ENCODE measurements at regions of chr11 and their contacts with region 1.

Region 1: GRCh38 chr11:1889224-1890120 is 2.2 kb downstream of the PRR33 start:
- DNase-seq: peak in 3 of 6 donors; percentile 38 to 79 (median 56)
- ATAC-seq: peak in 2 of 4 donors; percentile 49 to 56
- H3K4me3 ChIP-seq: no peak overlapping the region
- H3K27ac ChIP-seq: no peak overlapping the region
- H3K4me1 ChIP-seq: no peaks in the 10 kb centered on the region
- H3K27me3 ChIP-seq: no peaks in the 10 kb centered on the region
- CTCF ChIP-seq: no peak

Region 2: DNA sequence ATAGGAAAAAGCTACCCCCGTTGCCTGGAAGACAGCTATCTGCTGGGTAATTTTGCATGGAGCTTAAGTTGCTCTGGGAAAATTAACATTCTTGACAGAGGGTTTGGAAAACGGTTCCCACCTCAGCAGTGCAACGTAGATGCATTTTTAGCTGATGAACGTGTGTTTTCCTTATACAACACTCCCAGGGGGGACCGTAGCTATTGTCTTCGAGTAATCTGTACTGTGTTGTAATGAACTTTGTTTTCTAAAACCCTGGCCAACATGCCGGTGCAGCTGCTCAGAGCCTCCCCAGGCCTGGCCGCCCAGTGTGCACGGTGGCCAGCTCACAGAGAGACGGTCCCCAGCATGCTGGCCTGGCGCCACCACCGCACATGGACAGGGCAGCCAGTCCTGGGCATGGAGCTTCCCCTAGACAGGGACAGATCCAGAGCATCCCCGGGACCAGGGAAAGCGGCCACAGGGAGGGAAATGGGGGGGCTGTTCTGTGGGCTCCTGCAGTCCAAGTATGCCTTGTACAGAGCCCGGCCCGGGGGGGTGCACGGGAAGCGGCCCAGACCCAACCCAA is 32.2 kb after region 1 on chr11:
- intact Hi-C with region 1: loop called (anchors 1 kb)
- DNase-seq: peak in 3 of 6 donors; percentile 43 to 58 (median 58)
- ATAC-seq: peak in 2 of 4 donors; percentile 7 to 32
- H3K4me3 ChIP-seq: no peak overlapping the region
- H3K27ac ChIP-seq: no peak overlapping the region
- H3K4me1 ChIP-seq: no peaks in the 10 kb centered on the region
- H3K27me3 ChIP-seq: no peaks in the 10 kb centered on the region
- CTCF ChIP-seq: no peak

Region 3: DNA sequence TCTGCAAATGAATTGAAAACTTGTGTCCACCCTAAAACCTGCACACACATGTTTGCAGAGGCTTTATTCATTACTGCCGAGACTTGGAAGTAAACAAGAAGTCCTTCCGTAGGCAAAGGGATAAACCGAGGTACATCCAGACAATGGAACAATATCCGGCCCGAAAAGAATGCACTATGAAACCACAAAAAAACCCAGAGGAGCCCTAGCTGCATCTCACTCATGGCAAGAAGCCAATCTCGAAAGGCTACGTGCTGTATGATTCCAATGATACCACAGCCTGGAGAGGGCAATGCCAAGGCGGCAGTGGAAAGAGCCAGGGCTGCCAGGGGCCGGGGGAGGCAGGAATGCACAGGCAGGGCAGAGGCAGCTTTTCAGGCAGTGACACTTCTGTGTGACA is 54.5 kb after region 1 on chr11:
- intact Hi-C with region 1: loop called in 2 of 3 experiments (anchors 10 kb)
- DNase-seq: peak in 4 of 6 donors; percentile 10 to 39 (median 12)
- ATAC-seq: no peak
- H3K4me3 ChIP-seq: no peak overlapping the region
- H3K27ac ChIP-seq: no peak overlapping the region
- H3K4me1 ChIP-seq: no peaks in the 10 kb centered on the region
- H3K27me3 ChIP-seq: no peaks in the 10 kb centered on the region
- CTCF ChIP-seq: no peak